WTC11 (cell line): ENCODE measurements at regions of chr19 and their contacts with region 1.

Region 1: GRCh38 chr19:55301459-55302317 is 17.9 kb downstream of the BRSK1 start:
- DNase-seq: peak; percentile 98
- ATAC-seq: peak; percentile 69
- H3K4me3 Mint-ChIP-seq: peak overlapping the region; percentile 58
- H3K27ac Mint-ChIP-seq: no peak overlapping the region
- H3K4me1 Mint-ChIP-seq: peaks cover 25% of the 10 kb centered on the region
- H3K27me3 Mint-ChIP-seq: no peaks in the 10 kb centered on the region
- CTCF ChIP-seq: peak; percentile 99

Region 2: DNA sequence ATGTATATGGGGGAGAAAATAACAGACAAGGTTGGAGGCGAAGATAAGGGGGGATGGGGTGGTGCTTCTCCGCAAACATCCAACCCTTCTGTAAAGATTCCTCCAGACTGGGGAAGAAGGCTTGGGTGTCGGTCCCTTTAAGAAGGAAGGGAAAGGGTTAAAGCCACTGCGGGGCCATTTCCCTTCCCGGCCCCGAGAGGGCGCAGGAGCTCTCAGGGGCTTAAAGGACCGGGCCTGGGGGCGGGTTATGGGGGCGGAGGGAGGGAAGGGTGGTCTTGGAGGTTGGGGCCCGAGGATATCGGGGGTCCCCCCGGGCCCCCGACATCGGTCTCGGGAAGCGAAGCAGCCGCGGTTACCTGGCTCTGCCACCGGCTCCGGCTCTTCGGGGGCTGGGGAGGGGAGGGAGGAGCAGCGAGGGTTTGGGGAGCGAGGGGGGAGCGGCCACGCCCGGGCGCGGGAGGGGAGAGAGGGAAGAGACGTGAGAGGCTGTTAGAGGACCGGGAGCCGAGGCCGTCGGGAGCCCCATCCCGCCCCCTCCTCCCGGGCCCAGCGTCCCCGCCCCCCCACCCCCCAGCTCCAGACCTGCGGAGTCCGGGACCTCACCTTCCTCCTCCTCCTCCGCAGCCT is 155.5 kb before region 1 on chr19:
- CTCF ChIA-PET with region 1: interaction called, 14 read pairs
- POLR2A ChIA-PET with region 1: no interaction called
- DNase-seq: peak; percentile 79
- ATAC-seq: peak; percentile 33
- H3K4me3 Mint-ChIP-seq: peak overlapping the region; percentile 65
- H3K27ac Mint-ChIP-seq: no peak overlapping the region
- H3K4me1 Mint-ChIP-seq: peaks cover 39% of the 10 kb centered on the region
- H3K27me3 Mint-ChIP-seq: peaks cover 26% of the 10 kb centered on the region
- CTCF ChIP-seq: peak; percentile 75

Region 3: GRCh38 chr19:55232296-55232622 is 69.4 kb before region 1 on chr19:
- CTCF ChIA-PET with region 1: no interaction called
- POLR2A ChIA-PET with region 1: no interaction called
- DNase-seq: no peak
- ATAC-seq: no peak
- H3K4me3 Mint-ChIP-seq: no peak overlapping the region
- H3K27ac Mint-ChIP-seq: no peak overlapping the region
- H3K4me1 Mint-ChIP-seq: no peaks in the 10 kb centered on the region
- H3K27me3 Mint-ChIP-seq: no peaks in the 10 kb centered on the region
- CTCF ChIP-seq: no peak

Region 4: GRCh38 chr19:55279770-55280643 is 21.7 kb before region 1 on chr19 and contains the start of gene HSPBP1:
- CTCF ChIA-PET with region 1: interaction called, 19 read pairs
- POLR2A ChIA-PET with region 1: no interaction called
- DNase-seq: peak; percentile 99
- ATAC-seq: peak; percentile 91
- H3K4me3 Mint-ChIP-seq: peak within 1 kb of the TSS; percentile 96
- H3K27ac Mint-ChIP-seq: peak within 1 kb of the TSS; percentile 99
- H3K4me1 Mint-ChIP-seq: peaks cover 18% of the 10 kb centered on the region
- H3K27me3 Mint-ChIP-seq: no peaks in the 10 kb centered on the region
- CTCF ChIP-seq: no peak
- total RNA-seq, gene HSPBP1: 57.1 to 65.2 TPM (median 60.9 TPM) in 3 replicates

Region 5: DNA sequence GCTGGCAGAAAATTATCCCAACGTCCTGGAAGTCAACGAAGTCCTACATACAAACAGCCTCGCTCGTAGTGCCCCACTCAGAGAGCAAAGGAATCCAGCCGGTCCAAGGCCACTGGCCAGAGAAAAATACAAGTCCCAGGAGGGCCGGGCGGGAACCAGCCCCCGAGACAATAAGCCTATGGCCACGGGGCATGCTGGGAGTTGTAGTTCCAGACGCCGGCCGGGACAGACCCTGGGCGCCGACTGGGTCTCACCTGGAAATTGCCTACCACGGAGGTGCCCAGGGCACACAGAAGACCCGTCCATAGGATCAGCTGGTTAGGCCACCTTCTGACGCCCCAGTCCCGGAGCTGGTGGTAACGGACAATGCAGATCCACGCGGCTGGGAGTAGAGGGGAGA is 18.1 kb after region 1 on chr19:
- CTCF ChIA-PET with region 1: interaction called, 26 read pairs
- POLR2A ChIA-PET with region 1: no interaction called
- DNase-seq: peak; percentile 93
- ATAC-seq: peak; percentile 98
- H3K4me3 Mint-ChIP-seq: peak overlapping the region; percentile 71
- H3K27ac Mint-ChIP-seq: peak overlapping the region; percentile 39
- H3K4me1 Mint-ChIP-seq: peaks cover 18% of the 10 kb centered on the region
- H3K27me3 Mint-ChIP-seq: peaks cover 27% of the 10 kb centered on the region
- CTCF ChIP-seq: no peak

Region 6: DNA sequence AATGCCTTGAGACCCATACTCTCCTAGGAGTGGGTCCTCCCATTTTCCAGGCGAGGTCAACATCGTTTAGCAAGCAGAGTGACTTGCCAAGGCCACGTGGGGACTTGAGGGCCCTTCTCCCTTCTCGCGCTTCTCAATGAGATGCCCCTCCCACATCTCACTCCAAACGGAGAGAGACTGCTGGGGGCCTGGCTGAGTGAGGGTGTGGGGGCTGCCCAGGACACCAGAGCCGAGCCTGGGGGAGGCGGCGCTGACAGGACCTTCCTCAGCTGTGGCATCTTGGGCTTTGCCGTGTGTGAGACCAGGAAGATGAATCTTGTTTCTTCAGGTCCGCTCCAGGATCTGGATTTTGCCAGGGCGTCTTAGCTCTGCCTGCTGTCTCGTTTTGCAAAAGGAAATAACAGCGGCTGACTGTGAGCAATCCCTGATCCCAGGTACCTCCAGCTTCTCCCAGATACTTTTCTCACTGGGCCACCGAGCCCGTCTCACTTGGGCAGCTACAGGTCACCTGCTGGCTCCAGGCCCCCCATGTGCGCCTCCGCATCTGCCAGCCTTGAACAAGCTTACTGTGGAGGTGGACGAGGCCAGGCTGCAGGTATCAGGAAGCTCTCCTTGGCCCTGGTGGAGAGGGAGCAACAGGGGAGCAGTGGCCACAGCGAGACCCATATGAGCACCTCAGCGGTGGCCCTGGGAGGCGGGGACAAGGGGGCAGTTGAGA is 46.8 kb after region 1 on chr19:
- CTCF ChIA-PET with region 1: interaction called, 12 read pairs
- POLR2A ChIA-PET with region 1: interaction called, 8 read pairs
- DNase-seq: peak; percentile 50
- ATAC-seq: peak; percentile 38
- H3K4me3 Mint-ChIP-seq: peak overlapping the region; percentile 52
- H3K27ac Mint-ChIP-seq: peak overlapping the region; percentile 96
- H3K4me1 Mint-ChIP-seq: peaks cover 57% of the 10 kb centered on the region
- H3K27me3 Mint-ChIP-seq: peaks cover 32% of the 10 kb centered on the region
- CTCF ChIP-seq: no peak

Region 7: DNA sequence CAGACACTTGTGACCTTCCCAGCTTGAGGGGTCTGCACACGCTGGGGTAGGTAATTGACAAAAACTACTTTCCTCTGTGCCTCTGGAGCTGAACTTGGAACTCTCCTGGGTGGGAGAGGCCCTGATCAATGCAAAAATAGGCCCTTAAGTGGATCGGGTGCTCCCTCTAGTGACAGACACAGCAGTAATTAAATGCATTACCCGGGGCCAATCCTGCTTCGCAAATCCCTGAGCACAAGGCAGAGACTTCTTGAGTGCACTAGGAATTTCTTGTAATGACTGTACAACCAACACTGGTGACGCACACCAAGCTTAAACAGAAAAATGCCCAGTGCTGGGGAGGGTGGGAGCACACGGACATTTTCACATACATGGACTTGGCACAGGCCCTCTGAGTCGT is 116.5 kb after region 1 on chr19:
- CTCF ChIA-PET with region 1: interaction called, 14 read pairs
- POLR2A ChIA-PET with region 1: no interaction called
- DNase-seq: peak; percentile 71
- ATAC-seq: peak; percentile 97
- H3K4me3 Mint-ChIP-seq: no peak overlapping the region
- H3K27ac Mint-ChIP-seq: no peak overlapping the region; the same call in 1 of the 2 replicates
- H3K4me1 Mint-ChIP-seq: peaks cover 2% of the 10 kb centered on the region
- H3K27me3 Mint-ChIP-seq: peaks cover 78% of the 10 kb centered on the region
- CTCF ChIP-seq: peak; percentile 40